ENCODE measurements at regions of chr2 and their contacts with region 1.

Region 1: GRCh38 chr2:72150157-72150865 is 2.6 kb upstream of the CYP26B1 start:
- DNase-seq: no peak
- H3K4me3 ChIP-seq: no peak overlapping the region
- H3K27me3 ChIP-seq: peaks cover 49% of the 10 kb centered on the region
- CTCF ChIP-seq: peak; percentile 80

Region 2: GRCh38 chr2:71545572-71546274 is 604.6 kb before region 1 on chr2:
- CTCF ChIA-PET with region 1: interaction called, 150 read pairs
- POLR2A ChIA-PET with region 1: no interaction called
- DNase-seq: no peak
- H3K4me3 ChIP-seq: no peak overlapping the region
- H3K27me3 ChIP-seq: peaks cover 10% of the 10 kb centered on the region
- CTCF ChIP-seq: peak; percentile 79

Region 3: DNA sequence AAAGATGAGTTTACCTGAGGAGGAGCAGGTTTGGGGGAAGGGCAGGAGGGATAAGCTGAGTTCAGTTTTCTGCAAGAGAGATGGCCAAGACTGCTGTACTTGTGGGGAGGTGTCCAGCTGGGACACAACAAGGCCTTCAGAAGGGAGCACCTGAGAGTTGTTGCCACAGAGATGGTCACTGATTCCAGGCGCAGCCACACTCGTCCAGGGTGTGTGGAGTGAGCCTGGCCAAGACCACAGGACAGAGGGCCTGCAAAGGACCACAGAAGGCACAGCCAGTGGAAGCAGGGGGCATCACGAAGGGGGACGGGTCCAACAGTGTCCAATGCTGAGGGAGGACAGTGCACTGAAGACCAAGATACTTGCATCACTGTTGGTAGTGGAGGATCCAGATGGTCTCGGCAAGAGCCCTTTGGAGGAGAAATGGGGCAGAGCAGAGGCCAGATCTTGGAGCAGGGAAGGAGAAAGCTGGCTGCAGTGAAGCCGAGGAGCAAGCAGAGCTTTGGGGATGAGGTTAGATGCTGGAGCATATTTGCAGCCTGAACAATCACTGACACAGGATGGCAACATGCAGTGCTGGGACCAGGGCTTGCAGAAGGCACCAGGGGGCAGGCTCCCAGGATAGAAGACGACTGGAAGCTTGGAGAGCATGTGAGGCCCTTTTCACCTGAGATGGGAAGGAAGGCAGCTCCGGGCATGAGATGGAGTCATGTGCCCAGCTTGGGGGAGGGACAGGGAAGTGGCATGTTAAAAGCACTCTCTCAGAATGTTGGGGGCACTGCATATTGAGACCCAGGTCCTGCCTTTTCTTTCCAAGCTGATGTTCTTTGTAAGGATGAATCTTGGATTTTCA is 216.6 kb before region 1 on chr2:
- CTCF ChIA-PET with region 1: interaction called, 14 read pairs
- POLR2A ChIA-PET with region 1: no interaction called
- DNase-seq: no peak
- H3K4me3 ChIP-seq: no peak overlapping the region
- H3K27me3 ChIP-seq: no peaks in the 10 kb centered on the region
- CTCF ChIP-seq: peak; percentile 53

Region 4: DNA sequence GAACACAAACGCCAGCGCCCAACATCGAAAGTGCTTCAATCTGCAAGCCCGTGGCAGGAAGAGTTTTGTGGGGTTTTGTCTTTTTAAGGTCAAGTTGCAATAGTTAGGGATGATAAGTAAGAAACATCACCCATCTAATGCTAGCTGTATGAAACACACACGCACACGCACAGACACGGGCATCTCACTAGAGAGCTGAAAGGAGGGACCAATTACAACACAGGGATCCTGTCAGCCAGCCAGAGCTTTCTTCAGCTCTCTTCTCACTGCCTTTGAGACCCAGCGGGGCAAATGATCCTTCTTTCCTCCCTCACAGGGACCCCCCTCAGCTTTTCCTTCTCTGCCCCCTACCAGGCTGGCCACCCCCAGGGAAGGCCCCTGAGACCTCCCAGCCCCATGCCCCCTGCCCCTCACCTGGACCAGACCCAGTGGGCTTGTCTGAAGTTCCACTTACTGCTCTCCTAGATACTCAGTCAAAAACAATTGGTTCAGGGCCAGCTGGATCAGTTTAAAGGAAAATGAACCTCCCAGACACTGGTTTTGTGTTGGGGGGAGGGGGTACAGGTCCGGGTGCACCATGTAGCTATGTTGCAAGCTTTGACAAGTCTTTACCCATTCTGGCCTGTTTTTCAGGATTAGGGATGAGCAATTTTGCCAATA is 20.5 kb before region 1 on chr2:
- CTCF ChIA-PET with region 1: no interaction called
- POLR2A ChIA-PET with region 1: no interaction called
- DNase-seq: no peak
- H3K4me3 ChIP-seq: no peak overlapping the region
- H3K27me3 ChIP-seq: no peaks in the 10 kb centered on the region
- CTCF ChIP-seq: no peak

Region 5: GRCh38 chr2:72198532-72199241 is 48.4 kb after region 1 on chr2:
- CTCF ChIA-PET with region 1: no interaction called
- POLR2A ChIA-PET with region 1: interaction called, 29 read pairs
- DNase-seq: no peak
- H3K4me3 ChIP-seq: no peak overlapping the region
- H3K27me3 ChIP-seq: no peaks in the 10 kb centered on the region
- CTCF ChIP-seq: peak; percentile 30; the same call in 1 of the 2 replicates

Region 6: DNA sequence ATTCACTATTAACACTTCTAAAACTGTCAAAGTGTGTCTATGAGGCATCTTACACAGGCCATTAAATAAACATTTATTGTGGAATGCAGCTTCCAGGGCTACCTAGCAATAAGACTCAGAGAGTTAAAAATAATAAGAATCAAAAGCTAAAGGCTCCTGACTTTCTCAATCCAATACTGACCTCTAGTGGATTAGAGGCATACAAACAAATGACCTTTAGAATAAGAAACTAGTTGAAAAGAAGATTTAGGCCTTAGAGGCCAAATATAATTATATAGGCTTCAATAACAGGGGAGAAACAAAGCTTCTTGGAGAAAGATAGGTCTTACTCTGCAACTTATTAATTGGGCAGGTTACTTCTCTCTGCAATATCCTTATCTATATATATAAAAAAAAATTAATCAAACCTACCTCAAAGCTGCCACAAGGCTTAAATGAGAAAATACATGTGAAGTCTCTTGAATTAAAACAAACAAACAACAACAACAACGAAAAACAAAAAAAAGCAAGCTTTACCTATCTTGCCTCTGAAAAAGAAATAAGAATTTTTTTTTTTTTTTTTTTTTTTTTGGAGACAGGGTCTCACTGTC is 429.4 kb after region 1 on chr2:
- CTCF ChIA-PET with region 1: interaction called, 28 read pairs
- POLR2A ChIA-PET with region 1: no interaction called
- DNase-seq: no peak
- H3K4me3 ChIP-seq: no peak overlapping the region
- H3K27me3 ChIP-seq: no peaks in the 10 kb centered on the region
- CTCF ChIP-seq: peak; percentile 62

Measured in BJ (cell line).